ENCODE measurements at regions of chr5 and their contacts with region 1.

Region 1: DNA sequence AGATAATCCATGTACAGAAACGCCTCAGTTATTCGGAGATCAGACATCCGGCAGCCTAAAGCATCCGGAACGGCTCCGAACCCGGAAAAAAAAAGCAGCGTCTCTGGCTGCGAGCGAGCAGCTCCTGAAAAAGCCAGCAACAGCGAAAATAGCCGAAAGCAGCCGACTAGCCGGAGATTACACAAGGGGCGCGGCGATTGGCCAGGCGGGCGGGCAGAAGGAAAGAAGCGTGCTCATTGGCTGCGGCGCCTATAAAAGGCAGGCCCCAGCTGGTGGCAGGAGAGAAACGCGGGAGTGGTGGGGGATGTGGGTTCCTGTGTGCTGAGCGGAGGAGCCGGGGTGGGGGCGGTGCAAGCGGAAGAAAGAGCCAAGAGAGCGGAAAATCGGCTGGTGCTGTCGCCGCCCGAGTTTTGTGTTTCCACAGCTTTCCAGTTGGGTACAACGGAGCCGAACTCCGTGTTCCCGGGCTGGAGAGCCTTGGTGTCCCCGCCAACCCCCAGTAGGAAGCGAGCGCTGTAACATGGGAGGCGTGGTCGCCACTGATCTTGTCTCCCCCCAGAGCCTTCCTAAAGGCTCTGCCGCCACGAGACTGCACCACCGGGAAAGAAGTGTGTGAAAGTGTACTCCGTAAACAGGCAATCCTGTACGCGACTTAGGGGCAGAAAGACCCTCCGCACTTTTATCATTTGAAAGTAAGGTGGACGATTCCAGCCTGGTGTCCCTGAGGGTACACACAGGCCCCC is at the start of gene ARL15:
- DNase-seq: peak; percentile 97 to 99
- ATAC-seq: peak; percentile 95
- H3K4me3 ChIP-seq: peak within 1 kb of the TSS; percentile 59 to 94 (median 80)
- H3K27ac ChIP-seq: peak within 1 kb of the TSS; percentile 76 to 85 (median 82)
- H3K4me1 ChIP-seq: peaks cover 8 to 11% of the 10 kb centered on the region in 2 donors
- H3K27me3 ChIP-seq: no peaks in the 10 kb centered on the region
- CTCF ChIP-seq: no peak
- POLR2A ChIP-seq: peak; percentile 99 to 100
- total RNA-seq, gene ARL15: 1.7 to 5.5 (median 3.2) TPM

Region 2: GRCh38 chr5:53560506-53561191 is 750.0 kb before region 1 on chr5 and contains the start of gene NDUFS4:
- in situ Hi-C with region 1: no loop called
- intact Hi-C with region 1: loop called (anchors 5 kb)
- DNase-seq: peak; percentile 76 to 83
- ATAC-seq: peak; percentile 98
- H3K4me3 ChIP-seq: peak within 1 kb of the TSS; percentile 81 to 94 (median 91)
- H3K27ac ChIP-seq: peak within 1 kb of the TSS; percentile 89 to 94 (median 93)
- H3K4me1 ChIP-seq: peaks cover 35 to 45% of the 10 kb centered on the region in 2 donors
- H3K27me3 ChIP-seq: no peaks in the 10 kb centered on the region
- CTCF ChIP-seq: no peak
- POLR2A ChIP-seq: peak; percentile 55 to 71
- total RNA-seq, gene NDUFS4: 116 to 170 (median 145) TPM

Region 3: DNA sequence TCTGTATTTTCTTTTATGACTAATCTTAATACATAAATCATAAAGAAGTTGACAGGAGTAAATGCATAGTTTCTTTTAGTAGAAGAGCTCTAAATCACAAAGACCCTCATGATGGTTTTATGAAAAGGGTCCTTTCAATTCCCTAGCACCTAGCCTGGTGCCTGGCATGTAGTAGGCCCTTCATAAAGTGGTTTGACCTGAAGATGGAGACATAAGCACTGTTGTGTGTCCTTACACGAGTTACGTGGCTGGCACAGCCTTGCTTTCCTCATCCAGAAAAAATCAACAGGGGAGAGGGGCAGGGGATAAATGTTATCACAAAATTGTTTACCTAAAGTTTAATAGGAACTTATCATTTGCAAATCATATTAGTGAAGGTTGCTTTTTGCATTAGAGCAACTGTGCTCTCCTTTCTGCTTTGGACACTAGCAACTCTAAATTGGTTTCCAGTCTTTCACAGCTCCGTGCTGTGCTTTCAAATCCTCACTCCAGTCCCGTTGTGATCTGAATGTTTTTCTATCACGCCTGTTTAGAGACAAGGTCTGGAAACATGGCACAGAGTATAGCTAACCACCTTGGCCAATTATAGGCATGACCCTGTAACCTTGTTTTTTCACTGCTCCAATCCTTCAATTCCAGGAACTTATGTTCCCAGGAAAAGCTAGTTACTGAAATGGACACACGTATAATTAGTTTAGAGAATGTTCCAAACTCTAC is 56.0 kb before region 1 on chr5:
- in situ Hi-C with region 1: no loop called
- intact Hi-C with region 1: no loop called
- DNase-seq: no peak
- ATAC-seq: peak; percentile 74 to 80
- H3K4me3 ChIP-seq: peak overlapping the region in 3 of 4 donors; percentile 6 to 32 (median 21)
- H3K27ac ChIP-seq: peak overlapping the region in 1 of 4 donors; percentile 1
- H3K4me1 ChIP-seq: peaks cover 5 to 10% of the 10 kb centered on the region in 2 donors
- H3K27me3 ChIP-seq: no peaks in the 10 kb centered on the region
- CTCF ChIP-seq: peak in 1 of 5 experiments; percentile 15
- POLR2A ChIP-seq: no peak

Region 4: GRCh38 chr5:54492178-54492577 is 181.6 kb after region 1 on chr5:
- in situ Hi-C with region 1: no loop called
- intact Hi-C with region 1: loop called (anchors 5 kb)
- DNase-seq: no peak
- ATAC-seq: no peak
- H3K4me3 ChIP-seq: no peak overlapping the region
- H3K27ac ChIP-seq: no peak overlapping the region
- H3K4me1 ChIP-seq: peaks cover 0 to 4% of the 10 kb centered on the region in 2 donors
- H3K27me3 ChIP-seq: no peaks in the 10 kb centered on the region
- CTCF ChIP-seq: no peak
- POLR2A ChIP-seq: no peak

Region 5: GRCh38 chr5:55364537-55365055 is 1054.0 kb after region 1 on chr5:
- in situ Hi-C with region 1: no loop called
- intact Hi-C with region 1: loop called (anchors 10 kb)
- DNase-seq: no peak
- ATAC-seq: no peak
- H3K4me3 ChIP-seq: no peak overlapping the region
- H3K27ac ChIP-seq: no peak overlapping the region
- H3K4me1 ChIP-seq: no peaks in the 10 kb centered on the region
- H3K27me3 ChIP-seq: no peaks in the 10 kb centered on the region
- CTCF ChIP-seq: no peak
- POLR2A ChIP-seq: no peak

Measured in gastrocnemius medialis (tissue), 4 donors.